Right ventricle myocardium superior (tissue), 1 donor: ENCODE measurements at regions of chr11 and their contacts with region 1.

Region 1: GRCh38 chr11:107329164-107329563 is 128.5 kb downstream of the CWF19L2 start:
- DNase-seq: no peak
- ATAC-seq: no peak

Region 2: DNA sequence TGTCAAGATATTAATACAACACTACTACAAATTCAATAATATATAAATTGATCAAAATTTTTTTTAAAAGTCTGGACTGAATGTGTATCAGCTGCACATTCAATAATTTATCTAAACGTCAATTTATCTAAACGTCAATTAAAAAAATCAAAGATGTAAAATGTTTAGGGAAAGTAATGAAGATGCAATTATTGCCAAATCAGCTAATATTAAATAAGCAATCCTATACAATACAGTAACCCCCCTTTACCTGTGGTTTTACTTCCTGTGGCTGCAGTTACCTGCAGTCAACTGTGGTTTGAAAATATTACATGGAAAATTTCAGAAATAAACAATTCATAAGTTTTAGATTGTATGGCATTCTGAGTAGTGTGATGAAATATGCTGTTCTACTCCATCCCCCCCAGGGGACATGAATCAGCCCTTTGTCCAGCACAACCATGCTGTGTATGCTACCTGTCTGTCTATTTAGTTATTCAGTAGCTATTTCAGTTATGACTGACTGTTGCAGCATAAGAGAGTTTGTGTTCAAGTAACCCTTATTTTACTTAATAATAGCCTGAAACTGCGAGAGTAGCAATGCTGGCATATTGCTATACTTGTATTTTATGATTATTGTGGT is 56.3 kb after region 1 on chr11:
- intact Hi-C with region 1: loop called (anchors 10 kb)
- DNase-seq: no peak
- ATAC-seq: no peak